BJ (cell line): ENCODE measurements at regions of chr3 and their contacts with region 1.

Region 1: DNA sequence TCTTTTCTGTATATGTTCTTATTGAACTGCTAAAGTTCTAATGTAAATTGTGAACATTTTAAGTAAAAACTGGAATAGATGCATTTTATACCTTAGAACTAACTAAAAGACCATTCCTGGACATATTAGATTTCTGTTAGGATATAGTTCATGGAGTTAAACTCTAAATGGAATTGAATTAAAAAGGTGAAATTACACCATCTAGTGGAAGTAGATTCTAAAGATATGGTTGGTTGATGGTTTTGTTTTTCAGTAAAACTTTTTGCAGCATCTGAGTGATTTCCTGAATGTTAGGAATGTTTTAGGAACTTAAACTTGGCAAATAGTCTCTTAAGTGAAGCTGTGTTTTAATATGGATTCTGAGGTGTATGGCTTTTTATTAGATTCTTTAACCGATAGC is 96.8 kb downstream of the SLMAP start:
- DNase-seq: peak; percentile 17
- H3K4me3 ChIP-seq: no peak overlapping the region
- H3K27me3 ChIP-seq: no peaks in the 10 kb centered on the region
- CTCF ChIP-seq: 0 out of 2 replicates have a peak, but pooled peaks have one; percentile 31

Region 2: GRCh38 chr3:57397175-57398026 is 455.5 kb before region 1 on chr3:
- CTCF ChIA-PET with region 1: interaction called, 44 read pairs
- POLR2A ChIA-PET with region 1: no interaction called
- DNase-seq: no peak
- H3K4me3 ChIP-seq: no peak overlapping the region
- H3K27me3 ChIP-seq: no peaks in the 10 kb centered on the region; the same call in 1 of the 2 replicates
- CTCF ChIP-seq: peak; percentile 92

Region 3: GRCh38 chr3:57877116-57877515 is 24.2 kb after region 1 on chr3:
- CTCF ChIA-PET with region 1: no interaction called
- POLR2A ChIA-PET with region 1: no interaction called
- DNase-seq: no peak
- H3K4me3 ChIP-seq: no peak overlapping the region
- H3K27me3 ChIP-seq: no peaks in the 10 kb centered on the region
- CTCF ChIP-seq: no peak

Region 4: DNA sequence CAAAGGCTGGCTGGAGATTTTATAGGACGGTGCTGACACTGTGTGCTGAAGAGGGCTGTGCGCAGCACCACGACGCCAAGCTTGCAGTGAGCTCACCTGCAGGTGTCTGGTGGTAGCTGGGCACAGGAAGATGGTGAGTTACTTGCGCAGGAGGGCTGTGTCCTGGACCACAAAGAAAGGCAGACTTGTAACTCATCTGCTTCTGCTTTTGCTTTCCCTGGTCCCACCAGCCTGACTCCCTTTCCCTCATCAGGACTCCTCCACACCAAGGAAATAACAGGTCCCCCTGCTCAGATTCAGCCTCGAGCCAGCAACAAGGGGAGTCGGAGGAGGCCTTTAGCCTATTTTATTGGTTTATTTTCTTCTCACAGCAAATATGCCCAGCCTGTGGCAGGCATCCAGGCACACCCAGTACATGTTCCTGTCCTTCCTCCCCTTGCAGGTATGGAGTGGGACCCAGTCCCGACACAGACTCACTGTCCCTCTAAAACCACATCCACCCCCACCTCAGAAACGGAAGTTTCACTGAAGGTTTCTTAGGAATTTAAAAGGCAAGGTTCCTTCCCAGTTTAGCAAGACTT is 119.7 kb after region 1 on chr3:
- CTCF ChIA-PET with region 1: no interaction called
- POLR2A ChIA-PET with region 1: no interaction called
- DNase-seq: no peak
- H3K4me3 ChIP-seq: no peak overlapping the region
- H3K27me3 ChIP-seq: no peaks in the 10 kb centered on the region
- CTCF ChIP-seq: no peak

Region 5: GRCh38 chr3:58532794-58533220 is 679.9 kb after region 1 on chr3:
- CTCF ChIA-PET with region 1: no interaction called
- POLR2A ChIA-PET with region 1: no interaction called
- DNase-seq: no peak
- H3K4me3 ChIP-seq: no peak overlapping the region
- H3K27me3 ChIP-seq: no peaks in the 10 kb centered on the region
- CTCF ChIP-seq: peak; percentile 96